GM23248 (cell line): ENCODE measurements at regions of chr13 and their contacts with region 1.

Region 1: GRCh38 chr13:39616087-39616694 is 13.2 kb upstream of the LHFPL6 start:
- DNase-seq: peak; percentile 74
- H3K4me3 ChIP-seq: no peak overlapping the region
- H3K27ac ChIP-seq: no peak overlapping the region
- H3K4me1 ChIP-seq: no peaks in the 10 kb centered on the region
- H3K27me3 ChIP-seq: no peaks in the 10 kb centered on the region; the same call in 1 of the 2 replicates

Region 2: GRCh38 chr13:39144941-39145533 is 471.2 kb before region 1 on chr13:
- in situ Hi-C with region 1: loop called (anchors 5 kb)
- DNase-seq: peak; percentile 79
- H3K4me3 ChIP-seq: no peak overlapping the region
- H3K27ac ChIP-seq: no peak overlapping the region
- H3K4me1 ChIP-seq: no peaks in the 10 kb centered on the region; the same call in 1 of the 2 replicates
- H3K27me3 ChIP-seq: peaks cover 61% of the 10 kb centered on the region